H1 (cell line): ENCODE measurements at regions of chr5 and their contacts with region 1.

Region 1: GRCh38 chr5:82165740-82166530 is 112.2 kb downstream of the RPS23 start:
- DNase-seq: peak in 1 of 2 experiments; percentile 27
- H3K4me3 ChIP-seq: no peak overlapping the region
- H3K27ac ChIP-seq: no peak overlapping the region
- H3K4me1 ChIP-seq: peaks cover 0 to 6% (median 3%) of the 10 kb centered on the region in 4 experiments; a peak in 5 of 7 replicates
- H3K27me3 ChIP-seq: no peaks in the 10 kb centered on the region
- CTCF ChIP-seq: peak in 2 of 3 experiments; percentile 64 to 79; a peak in 3 of 4 replicates
- EP300 ChIP-seq: no peak
- POLR2A ChIP-seq: no peak
- RAD21 ChIP-seq: peak; percentile 92 to 94

Region 2: GRCh38 chr5:82107267-82107666 is 58.7 kb before region 1 on chr5:
- CTCF ChIA-PET with region 1: interaction called, 19 read pairs
- POLR2A ChIA-PET with region 1: no interaction called
- DNase-seq: no peak
- H3K4me3 ChIP-seq: no peak overlapping the region
- H3K27ac ChIP-seq: no peak overlapping the region
- H3K4me1 ChIP-seq: peaks cover 0 to 7% (median 1%) of the 10 kb centered on the region in 4 experiments; a peak in 3 of 7 replicates
- H3K27me3 ChIP-seq: no peaks in the 10 kb centered on the region
- CTCF ChIP-seq: peak in 1 of 3 experiments; percentile 35; a peak in 2 of 4 replicates
- EP300 ChIP-seq: no peak
- POLR2A ChIP-seq: no peak
- RAD21 ChIP-seq: peak; percentile 5 to 22; a peak in 1 of 4 replicates

Region 3: DNA sequence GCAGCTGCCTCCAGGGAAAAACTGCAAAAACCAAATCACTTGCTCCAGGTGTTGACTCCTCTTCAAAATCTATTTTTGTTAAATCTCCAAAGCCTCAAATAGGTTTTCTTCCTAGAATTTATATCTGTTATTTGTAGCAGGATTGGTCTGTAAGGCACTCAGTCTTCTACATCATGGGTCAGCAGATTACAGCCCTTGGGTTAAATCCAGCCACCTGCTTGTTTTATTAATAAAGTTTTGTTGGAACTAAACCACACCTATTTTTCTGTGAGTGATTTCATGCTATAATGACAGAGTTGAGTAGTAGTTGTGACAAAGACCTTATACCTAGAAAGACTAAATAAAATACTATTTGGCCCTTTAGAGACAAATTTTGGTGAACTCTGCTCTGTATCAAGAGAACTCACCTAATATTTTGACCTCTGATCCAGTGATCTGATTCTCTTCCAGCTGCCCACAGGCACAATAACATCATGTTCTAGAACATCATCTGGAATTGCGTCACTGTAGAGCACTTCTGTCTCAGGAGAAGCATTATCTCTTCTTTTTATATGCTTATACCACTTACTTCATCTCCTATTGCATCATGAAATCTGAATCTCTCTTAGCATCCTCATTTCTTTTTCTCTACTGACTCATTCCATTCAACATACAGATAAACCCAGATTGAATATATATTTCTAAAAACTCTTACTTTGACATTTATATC is 17.9 kb before region 1 on chr5:
- CTCF ChIA-PET with region 1: interaction called, 11 read pairs
- POLR2A ChIA-PET with region 1: interaction called, 4 read pairs
- DNase-seq: no peak
- H3K4me3 ChIP-seq: no peak overlapping the region
- H3K27ac ChIP-seq: no peak overlapping the region
- H3K4me1 ChIP-seq: peaks cover 0 to 2% (median 0%) of the 10 kb centered on the region in 4 experiments; a peak in 1 of 7 replicates
- H3K27me3 ChIP-seq: no peaks in the 10 kb centered on the region
- CTCF ChIP-seq: no peak
- EP300 ChIP-seq: no peak
- POLR2A ChIP-seq: no peak
- RAD21 ChIP-seq: no peak

Region 4: GRCh38 chr5:82225525-82226172 is 59.7 kb after region 1 on chr5:
- CTCF ChIA-PET with region 1: interaction called, 23 read pairs
- POLR2A ChIA-PET with region 1: no interaction called
- DNase-seq: peak; percentile 33 to 85
- H3K4me3 ChIP-seq: no peak overlapping the region
- H3K27ac ChIP-seq: no peak overlapping the region
- H3K4me1 ChIP-seq: peaks cover 0 to 9% (median 0%) of the 10 kb centered on the region in 4 experiments; a peak in 3 of 7 replicates
- H3K27me3 ChIP-seq: no peaks in the 10 kb centered on the region
- CTCF ChIP-seq: peak; percentile 52 to 89 (median 87)
- EP300 ChIP-seq: no peak
- POLR2A ChIP-seq: no peak
- RAD21 ChIP-seq: peak; percentile 98 to 99

Region 5: DNA sequence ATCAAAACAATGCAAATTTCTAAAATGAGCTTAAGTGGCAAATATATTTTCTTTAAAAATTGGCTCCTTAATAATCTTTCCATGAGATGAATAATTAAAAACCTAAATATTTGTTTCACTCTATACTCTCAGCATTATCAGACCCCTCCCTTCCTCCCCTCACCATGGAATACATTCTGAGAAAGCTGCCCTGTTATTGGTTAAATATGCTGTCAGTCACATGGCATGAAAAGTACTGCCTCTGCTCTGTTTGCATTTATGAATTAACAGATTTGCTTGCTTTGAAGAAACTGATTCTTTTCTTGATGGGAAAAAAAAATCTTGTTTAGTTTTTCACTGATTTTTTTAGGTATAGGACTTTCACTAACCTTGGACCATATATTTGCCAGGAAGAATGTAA is 129.2 kb after region 1 on chr5:
- CTCF ChIA-PET with region 1: no interaction called
- POLR2A ChIA-PET with region 1: no interaction called
- DNase-seq: no peak
- H3K4me3 ChIP-seq: no peak overlapping the region
- H3K27ac ChIP-seq: no peak overlapping the region
- H3K4me1 ChIP-seq: peaks cover 8 to 18% (median 10%) of the 10 kb centered on the region in 4 experiments; a peak in 6 of 7 replicates
- H3K27me3 ChIP-seq: peaks cover 0 to 1% (median 0%) of the 10 kb centered on the region in 4 experiments; a peak in 4 of 7 replicates
- CTCF ChIP-seq: no peak
- EP300 ChIP-seq: no peak
- POLR2A ChIP-seq: no peak
- RAD21 ChIP-seq: no peak

Region 6: GRCh38 chr5:82312373-82312856 is 146.5 kb after region 1 on chr5:
- CTCF ChIA-PET with region 1: no interaction called
- POLR2A ChIA-PET with region 1: no interaction called
- DNase-seq: peak; percentile 21 to 82
- H3K4me3 ChIP-seq: no peak overlapping the region
- H3K27ac ChIP-seq: no peak overlapping the region
- H3K4me1 ChIP-seq: peaks cover 0 to 9% (median 0%) of the 10 kb centered on the region in 4 experiments; a peak in 3 of 7 replicates
- H3K27me3 ChIP-seq: no peaks in the 10 kb centered on the region
- CTCF ChIP-seq: peak; percentile 79 to 97 (median 90)
- EP300 ChIP-seq: no peak
- POLR2A ChIP-seq: no peak
- RAD21 ChIP-seq: peak; percentile 94 to 95